Activated B cell treated with CpG ODN at 0.5 μM for 24 hours (primary cell): ENCODE measurements at regions of chr6 and their contacts with region 1.

Region 1: DNA sequence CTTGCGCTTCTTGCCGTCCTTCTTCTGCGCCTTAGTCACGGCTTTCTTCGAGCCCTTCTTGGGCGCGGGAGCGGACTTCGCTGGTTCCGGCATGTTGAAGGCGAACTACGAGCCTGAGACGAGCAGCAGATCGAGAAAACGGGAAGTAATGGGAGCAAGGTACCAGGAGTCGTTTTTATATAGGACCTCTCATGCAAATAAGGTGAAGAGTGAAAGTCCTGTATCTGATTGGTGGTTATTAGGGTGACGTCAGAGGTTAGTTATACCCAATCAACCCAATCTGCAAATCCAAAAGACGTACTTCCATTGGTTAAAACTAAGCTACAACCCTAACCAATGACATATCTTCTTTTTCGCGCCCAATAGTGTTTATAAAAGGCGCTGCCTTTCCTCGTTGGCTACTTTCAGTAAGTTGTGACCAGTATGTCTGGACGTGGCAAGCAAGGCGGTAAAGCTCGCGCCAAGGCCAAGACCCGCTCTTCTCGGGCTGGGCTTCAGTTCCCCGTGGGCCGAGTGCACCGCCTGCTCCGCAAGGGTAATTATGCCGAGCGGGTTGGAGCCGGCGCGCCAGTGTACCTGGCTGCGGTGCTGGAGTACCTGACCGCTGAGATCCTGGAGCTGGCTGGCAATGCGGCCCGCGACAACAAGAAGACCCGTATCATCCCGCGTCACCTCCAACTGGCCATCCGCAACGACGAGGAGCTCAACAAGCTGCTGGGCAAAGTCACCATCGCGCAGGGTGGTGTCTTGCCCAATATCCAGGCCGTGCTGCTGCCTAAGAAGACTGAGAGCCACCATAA is 100.6 kb upstream of the PRSS16 start:
- DNase-seq: peak; percentile 70
- ATAC-seq: peak; percentile 80
- H3K4me3 Mint-ChIP-seq: no peak overlapping the region
- H3K27ac Mint-ChIP-seq: no peak overlapping the region
- H3K4me1 Mint-ChIP-seq: peaks cover 26% of the 10 kb centered on the region
- H3K27me3 Mint-ChIP-seq: no peaks in the 10 kb centered on the region
- CTCF ChIP-seq: no peak

Region 2: DNA sequence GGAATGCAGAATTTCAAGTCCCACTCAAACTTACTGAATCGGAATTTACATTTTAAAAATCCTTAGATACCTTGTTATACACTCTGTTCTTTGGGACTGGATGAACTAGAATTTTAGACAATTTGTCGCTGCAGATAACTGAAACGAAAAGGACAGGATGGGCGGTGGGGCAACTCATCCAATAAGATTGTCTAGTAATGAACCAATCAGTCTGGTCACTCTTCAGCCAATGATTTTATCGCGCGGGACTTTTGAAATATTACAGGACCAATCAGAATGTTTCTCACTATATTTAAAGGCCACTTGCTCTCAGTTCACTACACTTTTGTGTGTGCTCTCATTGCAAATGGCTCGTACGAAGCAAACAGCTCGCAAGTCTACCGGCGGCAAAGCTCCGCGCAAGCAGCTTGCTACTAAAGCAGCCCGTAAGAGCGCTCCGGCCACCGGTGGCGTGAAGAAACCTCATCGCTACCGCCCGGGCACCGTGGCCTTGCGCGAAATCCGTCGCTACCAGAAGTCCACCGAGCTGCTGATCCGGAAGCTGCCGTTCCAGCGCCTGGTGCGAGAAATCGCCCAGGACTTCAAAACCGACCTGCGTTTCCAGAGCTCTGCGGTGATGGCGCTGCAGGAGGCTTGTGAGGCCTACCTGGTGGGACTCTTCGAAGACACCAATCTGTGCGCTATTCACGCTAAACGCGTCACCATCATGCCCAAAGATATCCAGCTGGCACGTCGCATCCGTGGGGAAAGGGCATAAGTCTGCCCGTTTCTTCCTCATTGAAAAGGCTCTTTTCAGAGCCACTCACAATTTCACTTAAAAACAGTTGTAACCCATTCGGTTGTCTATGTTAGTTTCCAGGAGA is 1101.6 kb before region 1 on chr6:
- CTCF ChIA-PET with region 1: interaction called, 3 read pairs
- POLR2A ChIA-PET with region 1: interaction called, 29 read pairs
- intact Hi-C with region 1: loop called (anchors 1 kb)
- DNase-seq: peak; percentile 51
- ATAC-seq: peak; percentile 58
- H3K4me3 Mint-ChIP-seq: peak overlapping the region; percentile 91
- H3K27ac Mint-ChIP-seq: peak overlapping the region; percentile 99
- H3K4me1 Mint-ChIP-seq: peaks cover 24% of the 10 kb centered on the region
- H3K27me3 Mint-ChIP-seq: no peaks in the 10 kb centered on the region
- CTCF ChIP-seq: no peak

Region 3: DNA sequence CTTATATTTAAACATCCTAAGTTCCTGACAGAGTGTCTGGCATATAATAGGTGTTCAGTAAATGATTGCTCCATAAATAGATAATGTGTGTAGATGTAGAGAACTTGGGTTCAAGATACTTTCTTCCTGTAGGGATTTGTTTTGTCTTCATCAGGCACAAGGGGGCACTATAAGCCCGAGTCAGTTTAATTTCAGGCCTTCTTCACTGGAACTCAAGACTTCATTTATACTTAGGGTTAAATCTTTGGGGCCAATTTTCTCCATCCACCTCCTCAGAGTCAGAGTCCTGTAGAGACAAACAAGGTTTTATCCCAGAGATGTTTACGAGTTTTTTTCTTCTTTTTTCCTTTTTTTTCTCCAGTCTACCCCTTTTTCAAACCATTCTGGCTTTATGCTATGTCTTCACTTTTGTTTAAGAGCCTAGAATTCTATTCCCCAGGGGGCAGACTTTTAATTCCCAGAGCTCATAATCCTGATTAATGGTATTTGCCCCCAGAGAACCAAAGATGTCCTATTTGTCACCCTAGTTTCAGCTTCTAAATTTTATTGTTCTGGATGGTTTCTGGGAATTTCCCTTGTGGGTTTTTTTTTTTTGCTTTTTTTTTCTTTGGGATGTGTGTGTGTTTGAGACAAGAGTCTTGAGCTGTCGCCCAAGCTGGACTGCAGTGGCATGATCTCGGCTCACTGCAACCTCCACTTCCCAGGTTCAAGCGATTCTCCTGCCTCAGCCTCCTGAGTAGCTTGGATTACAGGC is 971.3 kb before region 1 on chr6:
- CTCF ChIA-PET with region 1: no interaction called
- POLR2A ChIA-PET with region 1: interaction called, 4 read pairs
- intact Hi-C with region 1: loop called (anchors 5 kb)
- DNase-seq: no peak
- ATAC-seq: no peak
- H3K4me3 Mint-ChIP-seq: no peak overlapping the region
- H3K27ac Mint-ChIP-seq: peak overlapping the region; percentile 65
- H3K4me1 Mint-ChIP-seq: peaks cover 38% of the 10 kb centered on the region
- H3K27me3 Mint-ChIP-seq: no peaks in the 10 kb centered on the region
- CTCF ChIP-seq: no peak

Region 4: DNA sequence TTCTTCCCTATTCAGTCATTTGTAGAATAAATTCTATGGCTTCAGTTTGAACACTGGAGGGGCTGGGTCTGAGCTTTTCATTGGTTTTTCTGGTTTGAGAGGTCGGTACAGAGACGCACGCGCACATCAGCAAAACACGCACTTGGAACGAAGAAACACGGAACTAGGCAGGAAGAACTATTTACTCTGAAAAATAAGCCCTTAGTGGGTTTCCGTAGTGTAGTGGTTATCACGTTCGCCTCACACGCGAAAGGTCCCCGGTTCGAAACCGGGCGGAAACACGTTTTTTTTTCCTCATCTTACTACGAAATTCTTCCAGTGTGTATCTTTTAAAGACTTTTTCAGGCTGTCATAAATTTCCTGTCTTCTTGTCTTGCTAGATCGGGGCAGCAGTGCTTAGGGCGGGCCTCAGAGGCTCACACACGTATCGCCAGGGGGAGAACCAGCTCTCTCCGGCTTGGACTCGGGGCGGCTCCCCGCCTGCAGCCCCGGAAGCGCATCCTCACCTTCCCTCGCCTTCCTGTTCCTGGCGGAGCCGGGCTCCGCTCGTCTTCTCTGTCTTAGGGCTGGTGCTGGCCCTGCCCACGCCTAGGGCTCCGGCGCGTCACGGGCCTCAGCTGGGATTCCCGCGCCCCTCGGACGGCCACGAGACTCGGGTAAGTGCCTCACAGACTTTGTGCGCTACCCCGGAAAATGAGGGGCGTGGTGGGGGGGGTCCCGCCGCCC is 608.9 kb before region 1 on chr6 and contains the start of gene HMGN4:
- CTCF ChIA-PET with region 1: no interaction called
- POLR2A ChIA-PET with region 1: interaction called, 16 read pairs
- intact Hi-C with region 1: no loop called
- DNase-seq: peak; percentile 73
- ATAC-seq: peak; percentile 67
- H3K4me3 Mint-ChIP-seq: peak within 1 kb of the TSS; percentile 98
- H3K27ac Mint-ChIP-seq: peak within 1 kb of the TSS; percentile 97
- H3K4me1 Mint-ChIP-seq: peaks cover 65% of the 10 kb centered on the region
- H3K27me3 Mint-ChIP-seq: peaks cover 7% of the 10 kb centered on the region
- CTCF ChIP-seq: no peak
- total RNA-seq, gene HMGN4: 74.5 and 82.2 TPM in 2 replicates

Region 5: DNA sequence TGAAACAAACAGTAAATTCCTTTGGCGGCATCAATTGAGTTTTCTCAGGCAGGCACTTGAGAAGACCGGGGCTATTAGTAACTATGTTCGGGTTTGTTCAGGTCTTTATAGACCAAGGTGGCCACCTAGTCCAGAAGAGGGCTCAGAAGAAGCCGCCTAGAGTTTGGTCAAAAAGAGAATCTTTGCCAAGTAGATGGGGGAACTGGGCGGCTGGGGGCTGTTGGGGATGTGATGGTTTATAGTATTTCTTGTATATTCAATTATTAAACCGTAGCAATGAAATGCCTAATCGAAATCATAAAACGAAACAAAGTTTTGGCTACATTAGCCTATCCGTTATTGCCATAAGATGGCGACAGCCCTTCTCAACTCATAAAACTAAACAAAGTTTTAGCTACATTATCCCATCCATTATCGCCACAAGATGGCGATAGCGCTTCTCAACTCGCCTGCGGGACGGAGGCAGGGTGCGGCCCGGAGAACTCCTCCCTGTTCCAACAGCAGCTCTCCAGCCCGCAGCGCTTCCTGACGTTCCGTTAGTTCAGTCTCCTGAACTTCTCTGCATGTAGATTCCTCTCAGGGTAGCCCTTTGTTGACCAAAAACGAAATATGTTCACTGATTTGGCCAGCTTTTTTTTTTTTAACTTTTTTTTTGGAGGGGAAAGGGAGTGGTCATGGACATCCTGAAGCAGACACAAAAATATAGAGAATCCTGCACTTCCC is 19.9 kb before region 1 on chr6:
- CTCF ChIA-PET with region 1: interaction called, 11 read pairs
- POLR2A ChIA-PET with region 1: interaction called, 510 read pairs
- intact Hi-C with region 1: loop called (anchors 1 kb)
- DNase-seq: peak; percentile 55
- ATAC-seq: peak; percentile 79
- H3K4me3 Mint-ChIP-seq: peak overlapping the region; percentile 81
- H3K27ac Mint-ChIP-seq: peak overlapping the region; percentile 82
- H3K4me1 Mint-ChIP-seq: peaks cover 14% of the 10 kb centered on the region
- H3K27me3 Mint-ChIP-seq: no peaks in the 10 kb centered on the region
- CTCF ChIP-seq: peak; percentile 54

Region 6: GRCh38 chr6:27809939-27810767 is 663.2 kb after region 1 on chr6:
- CTCF ChIA-PET with region 1: no interaction called
- POLR2A ChIA-PET with region 1: interaction called, 70 read pairs
- intact Hi-C with region 1: no loop called
- DNase-seq: peak; percentile 68
- ATAC-seq: peak; percentile 59
- H3K4me3 Mint-ChIP-seq: peak overlapping the region; percentile 93
- H3K27ac Mint-ChIP-seq: peak overlapping the region; percentile 97
- H3K4me1 Mint-ChIP-seq: peaks cover 59% of the 10 kb centered on the region
- H3K27me3 Mint-ChIP-seq: no peaks in the 10 kb centered on the region
- CTCF ChIP-seq: no peak

Region 7: GRCh38 chr6:28863604-28864320 is 1716.9 kb after region 1 on chr6:
- CTCF ChIA-PET with region 1: no interaction called
- POLR2A ChIA-PET with region 1: interaction called, 12 read pairs
- intact Hi-C with region 1: loop called (anchors 1 kb)
- DNase-seq: peak; percentile 54
- ATAC-seq: peak; percentile 30
- H3K4me3 Mint-ChIP-seq: peak overlapping the region; percentile 85
- H3K27ac Mint-ChIP-seq: peak overlapping the region; percentile 90
- H3K4me1 Mint-ChIP-seq: peaks cover 27% of the 10 kb centered on the region
- H3K27me3 Mint-ChIP-seq: peaks cover 4% of the 10 kb centered on the region
- CTCF ChIP-seq: no peak